HepG2 (cell line): ENCODE measurements at regions of chr13 and their contacts with region 1.

Region 1: DNA sequence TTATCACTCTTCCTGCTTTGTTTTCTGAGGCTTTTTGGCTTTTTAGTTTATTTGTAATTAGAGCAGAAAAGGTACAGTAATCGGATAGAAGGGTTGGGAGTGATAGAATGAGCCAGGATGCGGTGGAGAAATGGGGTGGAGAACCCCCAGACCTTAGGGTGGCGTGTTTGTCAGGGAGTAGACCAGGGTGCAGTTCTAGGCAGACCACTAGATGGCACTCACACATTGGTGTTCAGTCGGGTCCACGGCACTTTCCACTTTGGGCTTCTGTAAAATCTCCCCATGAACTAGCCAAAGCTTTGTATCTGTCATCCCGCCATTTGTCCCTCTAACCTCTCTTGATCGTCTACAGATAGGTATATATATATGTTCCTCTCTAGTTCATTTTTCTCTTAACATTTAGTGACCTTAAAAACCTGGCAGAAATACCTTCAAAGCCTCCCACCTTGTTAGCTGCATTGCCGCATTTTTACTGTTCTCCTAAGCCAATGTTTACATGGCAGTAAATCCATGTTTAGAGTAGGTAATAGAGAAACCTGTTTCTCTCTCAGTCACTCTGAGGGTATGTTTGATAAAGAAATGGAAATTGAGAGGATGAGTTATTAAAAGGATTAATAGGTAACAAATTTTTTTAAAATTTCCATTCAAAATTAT is 154.9 kb downstream of the TM9SF2 start:
- DNase-seq: peak; percentile 57
- ATAC-seq: peak; percentile 93
- H3K4me3 ChIP-seq: peak overlapping the region; percentile 46 to 67 (median 48); a peak in 5 of 6 replicates
- H3K27ac ChIP-seq: peak overlapping the region; percentile 38
- H3K4me1 ChIP-seq: peaks cover 21% of the 10 kb centered on the region
- H3K27me3 ChIP-seq: no peaks in the 10 kb centered on the region
- CTCF ChIP-seq: peak; percentile 93
- EP300 ChIP-seq: no peak
- POLR2A ChIP-seq: no peak
- RAD21 ChIP-seq: peak; percentile 83

Region 2: GRCh38 chr13:99677116-99677951 is 21.1 kb after region 1 on chr13:
- CTCF ChIA-PET with region 1: no interaction called
- POLR2A ChIA-PET with region 1: no interaction called
- in situ Hi-C with region 1: no loop called
- intact Hi-C with region 1: no loop called
- DNase-seq: no peak
- ATAC-seq: no peak
- H3K4me3 ChIP-seq: no peak overlapping the region
- H3K27ac ChIP-seq: no peak overlapping the region
- H3K4me1 ChIP-seq: no peaks in the 10 kb centered on the region
- H3K27me3 ChIP-seq: no peaks in the 10 kb centered on the region
- CTCF ChIP-seq: no peak
- EP300 ChIP-seq: no peak
- POLR2A ChIP-seq: no peak
- RAD21 ChIP-seq: no peak

Region 3: DNA sequence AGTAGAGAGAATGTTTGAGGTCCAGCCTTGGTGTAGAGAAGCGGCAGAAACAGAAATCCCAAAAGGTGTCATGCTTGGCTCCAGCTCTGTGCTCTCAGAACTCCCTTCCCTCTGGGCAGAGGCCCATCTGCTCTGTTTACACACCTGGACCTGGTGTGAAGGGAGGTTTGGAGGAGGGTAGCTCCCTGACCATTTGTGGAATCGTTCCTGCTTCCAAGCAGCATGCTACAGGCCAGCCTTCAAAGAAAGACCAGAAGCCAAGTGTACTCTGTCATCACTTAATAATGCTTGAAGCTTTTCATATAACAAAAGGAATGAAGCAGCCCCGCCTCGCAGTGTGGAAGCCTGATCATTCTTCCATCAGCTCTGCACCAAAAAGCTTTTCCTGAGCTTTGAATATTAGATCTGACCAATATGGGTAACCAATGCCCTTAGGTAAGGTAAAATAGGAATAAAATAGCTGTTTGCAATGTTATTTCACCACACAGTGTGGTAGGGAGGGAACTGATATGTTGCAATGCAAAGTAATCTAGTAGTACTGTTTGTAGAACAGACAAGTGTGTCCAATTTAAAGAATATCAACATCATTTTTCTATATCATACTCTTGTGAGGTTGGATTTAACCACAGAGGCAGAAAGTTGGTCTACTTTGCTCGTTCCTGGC is 252.1 kb after region 1 on chr13:
- CTCF ChIA-PET with region 1: no interaction called
- POLR2A ChIA-PET with region 1: no interaction called
- in situ Hi-C with region 1: no loop called
- intact Hi-C with region 1: loop called (anchors 2 kb)
- DNase-seq: no peak
- ATAC-seq: peak; percentile 35
- H3K4me3 ChIP-seq: peak overlapping the region in 1 of 3 experiments; percentile 32; a peak in 2 of 6 replicates
- H3K27ac ChIP-seq: peak overlapping the region; percentile 6
- H3K4me1 ChIP-seq: peaks cover 71% of the 10 kb centered on the region
- H3K27me3 ChIP-seq: peaks cover 0 to 6% of the 10 kb centered on the region in 2 experiments; a peak in 1 of 5 replicates
- CTCF ChIP-seq: no peak
- EP300 ChIP-seq: no peak
- POLR2A ChIP-seq: no peak
- RAD21 ChIP-seq: no peak

Region 4: GRCh38 chr13:99969919-99970621 is 313.9 kb after region 1 on chr13:
- CTCF ChIA-PET with region 1: no interaction called
- POLR2A ChIA-PET with region 1: no interaction called
- in situ Hi-C with region 1: no loop called
- intact Hi-C with region 1: loop called (anchors 5 kb)
- DNase-seq: peak; percentile 57
- ATAC-seq: peak; percentile 73
- H3K4me3 ChIP-seq: peak overlapping the region; percentile 42 to 66 (median 50); a peak in 4 of 6 replicates
- H3K27ac ChIP-seq: no peak overlapping the region
- H3K4me1 ChIP-seq: peaks cover 7% of the 10 kb centered on the region; the same call in 1 of the 2 replicates
- H3K27me3 ChIP-seq: peaks cover 9 to 30% of the 10 kb centered on the region in 2 experiments
- CTCF ChIP-seq: 0 out of 2 replicates have a peak, but pooled peaks have one; percentile 4
- EP300 ChIP-seq: no peak
- POLR2A ChIP-seq: no peak
- RAD21 ChIP-seq: no peak

Region 5: GRCh38 chr13:100514788-100515409 is 858.7 kb after region 1 on chr13:
- CTCF ChIA-PET with region 1: interaction called, 3 read pairs
- POLR2A ChIA-PET with region 1: no interaction called
- in situ Hi-C with region 1: no loop called
- intact Hi-C with region 1: loop called (anchors 1 kb)
- DNase-seq: peak; percentile 56
- ATAC-seq: peak; percentile 92
- H3K4me3 ChIP-seq: no peak overlapping the region
- H3K27ac ChIP-seq: no peak overlapping the region
- H3K4me1 ChIP-seq: peaks cover 31% of the 10 kb centered on the region
- H3K27me3 ChIP-seq: no peaks in the 10 kb centered on the region
- CTCF ChIP-seq: peak; percentile 93
- EP300 ChIP-seq: no peak
- POLR2A ChIP-seq: no peak
- RAD21 ChIP-seq: peak; percentile 84

Region 6: DNA sequence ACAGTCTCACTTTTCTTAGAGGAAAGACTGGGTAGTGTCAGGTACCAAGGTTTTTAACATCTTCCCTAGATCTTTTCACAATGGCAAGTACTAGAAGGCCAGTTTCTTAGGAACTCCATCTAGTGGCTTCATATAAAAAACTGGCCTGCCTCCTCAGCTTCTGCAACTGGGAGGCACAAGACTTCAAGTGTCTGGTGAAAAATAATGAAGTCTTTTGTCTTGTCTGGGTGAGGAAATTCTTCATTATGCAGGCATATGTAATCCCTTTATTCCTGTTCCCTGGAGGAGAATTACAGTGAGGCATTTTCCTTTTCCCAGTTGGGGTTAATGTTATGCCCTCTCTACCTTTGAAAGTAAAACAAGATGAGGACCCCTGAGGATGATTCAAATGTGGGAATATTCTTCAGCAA is 1459.5 kb after region 1 on chr13:
- CTCF ChIA-PET with region 1: no interaction called
- POLR2A ChIA-PET with region 1: no interaction called
- in situ Hi-C with region 1: loop called (anchors 25 kb)
- intact Hi-C with region 1: no loop called
- DNase-seq: no peak
- ATAC-seq: no peak
- H3K4me3 ChIP-seq: no peak overlapping the region
- H3K27ac ChIP-seq: no peak overlapping the region
- H3K4me1 ChIP-seq: no peaks in the 10 kb centered on the region
- H3K27me3 ChIP-seq: peaks cover 0 to 3% of the 10 kb centered on the region in 2 experiments; a peak in 2 of 5 replicates
- CTCF ChIP-seq: no peak
- EP300 ChIP-seq: no peak
- POLR2A ChIP-seq: no peak
- RAD21 ChIP-seq: no peak